ENCODE measurements at regions of chr6 and their contacts with region 1.

Region 1: DNA sequence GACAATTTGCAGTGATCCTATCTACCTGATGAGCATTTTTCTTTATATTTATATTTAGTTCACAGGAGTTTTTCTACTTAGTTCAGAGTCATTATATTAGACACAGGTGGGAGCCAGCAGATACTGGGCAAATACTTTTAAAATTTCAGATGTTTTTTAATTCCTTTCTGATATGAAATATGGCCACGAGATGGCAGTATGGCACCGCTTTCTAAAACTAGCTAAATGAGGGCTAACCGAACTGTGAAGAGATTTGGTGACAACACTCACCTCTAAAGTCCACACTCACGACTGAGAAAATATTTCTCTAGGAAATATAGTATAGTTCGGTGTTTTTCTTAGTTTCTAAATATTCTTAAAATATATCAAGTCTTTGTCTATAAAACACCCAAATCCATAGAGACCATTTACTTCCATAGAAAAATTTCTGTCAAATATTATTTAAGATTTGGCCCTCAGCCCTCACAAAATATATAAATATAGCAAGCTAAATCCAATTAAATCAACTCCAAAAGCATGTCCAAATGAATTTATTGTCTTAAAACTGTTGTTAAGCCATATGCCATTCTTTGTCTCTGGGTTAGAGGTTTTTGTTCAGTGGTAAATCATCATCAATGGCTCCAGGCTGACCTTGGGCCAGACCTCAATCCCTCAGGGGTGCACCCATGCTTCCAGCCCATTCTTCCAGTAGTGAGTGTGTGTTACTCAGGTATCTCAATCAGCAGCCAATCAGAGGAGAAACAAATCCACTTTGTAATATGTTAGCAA is 63.6 kb downstream of the HUS1B start:
- DNase-seq: peak; percentile 52
- H3K4me3 ChIP-seq: no peak overlapping the region
- H3K27ac ChIP-seq: no peak overlapping the region
- H3K4me1 ChIP-seq: no peaks in the 10 kb centered on the region
- H3K27me3 ChIP-seq: no peaks in the 10 kb centered on the region
- CTCF ChIP-seq: peak; percentile 81
- EP300 ChIP-seq: no peak
- RAD21 ChIP-seq: peak; percentile 79

Region 2: DNA sequence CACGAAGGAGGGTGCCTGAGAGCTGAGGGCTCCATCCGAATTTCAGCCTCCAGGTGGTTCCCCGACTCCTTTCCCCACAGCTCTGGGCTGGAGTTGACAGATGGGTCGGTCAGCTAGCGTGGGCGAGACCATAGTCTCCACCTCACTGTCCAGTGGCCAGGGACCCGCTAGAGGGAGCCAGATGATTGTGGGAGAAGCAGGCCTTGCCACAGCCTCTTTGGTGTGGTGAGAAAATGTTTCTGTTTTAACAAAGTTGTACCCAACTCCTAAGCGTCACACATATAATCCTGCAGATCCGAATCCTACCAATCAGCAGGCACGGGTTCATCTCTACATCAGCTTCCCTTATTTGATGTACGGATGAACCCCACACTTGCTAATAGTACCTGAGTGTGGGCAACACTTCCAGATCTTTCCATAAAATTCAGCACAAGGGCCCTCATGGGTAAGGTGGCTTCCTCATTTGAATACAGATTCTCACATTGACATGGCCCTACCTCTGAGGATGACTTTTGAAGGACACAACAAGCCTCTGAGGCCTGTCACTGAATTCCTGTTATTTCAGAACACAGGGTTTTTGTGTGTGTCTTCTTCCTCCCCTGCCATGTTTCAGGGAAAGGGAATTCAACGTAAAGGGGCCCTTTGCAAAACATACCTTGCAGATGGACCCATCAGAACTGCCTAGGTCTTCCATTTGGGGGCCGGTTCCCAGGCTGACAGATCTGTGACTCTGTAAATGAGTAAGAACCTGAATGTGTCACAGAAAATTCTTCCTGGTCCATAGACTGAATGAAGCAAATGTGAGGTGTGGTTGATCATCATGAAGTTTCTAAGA is 404.3 kb before region 1 on chr6:
- CTCF ChIA-PET with region 1: interaction called, 20 read pairs
- POLR2A ChIA-PET with region 1: no interaction called
- DNase-seq: peak; percentile 82
- H3K4me3 ChIP-seq: peak overlapping the region in 1 of 2 experiments; percentile 12; a peak in 1 of 4 replicates
- H3K27ac ChIP-seq: no peak overlapping the region
- H3K4me1 ChIP-seq: no peaks in the 10 kb centered on the region
- H3K27me3 ChIP-seq: peaks cover 44% of the 10 kb centered on the region; the same call in 1 of the 2 replicates
- CTCF ChIP-seq: peak; percentile 93
- EP300 ChIP-seq: no peak
- RAD21 ChIP-seq: peak; percentile 94

Region 3: GRCh38 chr6:446418-447366 is 146.6 kb before region 1 on chr6:
- CTCF ChIA-PET with region 1: no interaction called
- POLR2A ChIA-PET with region 1: no interaction called
- DNase-seq: no peak
- H3K4me3 ChIP-seq: no peak overlapping the region
- H3K27ac ChIP-seq: no peak overlapping the region
- H3K4me1 ChIP-seq: no peaks in the 10 kb centered on the region
- H3K27me3 ChIP-seq: peaks cover 66% of the 10 kb centered on the region; the same call in 1 of the 2 replicates
- CTCF ChIP-seq: no peak
- EP300 ChIP-seq: no peak
- RAD21 ChIP-seq: no peak

Region 4: DNA sequence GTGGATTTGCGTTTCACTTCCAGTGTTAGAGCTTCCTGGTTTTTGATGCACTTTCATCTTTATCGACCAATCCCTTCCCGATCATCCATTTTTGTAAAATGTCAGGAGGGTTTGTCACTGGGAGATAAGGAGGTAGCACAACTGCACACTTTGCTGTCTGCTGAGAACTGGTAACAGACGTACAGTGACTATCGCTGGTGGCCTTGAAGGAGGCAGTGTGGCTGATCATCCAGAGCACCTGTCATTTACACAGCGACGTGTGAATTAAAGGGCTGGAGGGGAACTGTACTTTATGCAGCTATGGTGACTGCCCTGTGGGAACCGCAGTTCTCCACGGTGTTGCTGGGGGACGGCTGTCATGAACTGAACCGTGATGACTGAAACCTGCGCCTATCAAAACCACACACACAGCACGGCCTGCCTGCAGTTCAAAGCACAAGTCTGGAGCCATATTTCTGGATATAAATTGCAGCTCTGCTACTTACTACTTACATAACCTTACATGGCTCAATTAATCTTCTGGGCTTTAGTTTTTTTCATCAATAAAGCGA is 13.6 kb after region 1 on chr6:
- CTCF ChIA-PET with region 1: interaction called, 24 read pairs
- POLR2A ChIA-PET with region 1: no interaction called
- DNase-seq: no peak
- H3K4me3 ChIP-seq: no peak overlapping the region
- H3K27ac ChIP-seq: no peak overlapping the region
- H3K4me1 ChIP-seq: no peaks in the 10 kb centered on the region; a peak in 1 of 4 replicates
- H3K27me3 ChIP-seq: no peaks in the 10 kb centered on the region
- CTCF ChIP-seq: no peak
- EP300 ChIP-seq: no peak
- RAD21 ChIP-seq: no peak

Region 5: GRCh38 chr6:674406-674805 is 81.1 kb after region 1 on chr6:
- CTCF ChIA-PET with region 1: no interaction called
- POLR2A ChIA-PET with region 1: no interaction called
- DNase-seq: no peak
- H3K4me3 ChIP-seq: no peak overlapping the region
- H3K27ac ChIP-seq: no peak overlapping the region
- H3K4me1 ChIP-seq: no peaks in the 10 kb centered on the region
- H3K27me3 ChIP-seq: no peaks in the 10 kb centered on the region
- CTCF ChIP-seq: no peak
- EP300 ChIP-seq: no peak
- RAD21 ChIP-seq: no peak

Region 6: DNA sequence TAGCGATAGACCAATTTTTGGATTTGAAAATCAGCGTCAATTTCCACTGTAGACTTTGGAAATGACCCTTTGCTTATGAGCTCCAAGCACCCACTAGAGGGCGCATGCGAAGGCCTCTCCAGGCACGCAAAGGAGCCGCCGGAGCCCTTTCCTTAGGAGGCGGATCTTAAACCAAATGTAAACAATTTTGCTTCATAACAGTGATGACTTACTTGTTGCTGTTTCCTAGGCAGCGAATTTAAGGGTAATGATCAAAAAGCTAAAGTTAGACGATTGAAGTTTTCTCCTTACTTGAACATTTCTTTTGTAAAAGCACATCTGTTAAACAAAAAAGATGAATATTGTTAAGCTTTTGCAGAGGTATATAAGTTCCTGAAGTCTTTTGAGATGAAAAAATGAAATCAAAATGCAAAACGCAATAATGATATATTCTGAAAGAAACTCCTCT is 128.8 kb after region 1 on chr6:
- CTCF ChIA-PET with region 1: interaction called, 44 read pairs
- POLR2A ChIA-PET with region 1: no interaction called
- DNase-seq: peak; percentile 71
- H3K4me3 ChIP-seq: peak overlapping the region in 1 of 2 experiments; percentile 4; a peak in 1 of 4 replicates
- H3K27ac ChIP-seq: no peak overlapping the region
- H3K4me1 ChIP-seq: no peaks in the 10 kb centered on the region
- H3K27me3 ChIP-seq: peaks cover 15% of the 10 kb centered on the region; the same call in 1 of the 2 replicates
- CTCF ChIP-seq: peak; percentile 97
- EP300 ChIP-seq: no peak
- RAD21 ChIP-seq: peak; percentile 57

Region 7: GRCh38 chr6:1387876-1388629 is 794.7 kb after region 1 on chr6:
- CTCF ChIA-PET with region 1: interaction called, 10 read pairs
- POLR2A ChIA-PET with region 1: no interaction called
- DNase-seq: no peak
- H3K4me3 ChIP-seq: no peak overlapping the region
- H3K27ac ChIP-seq: no peak overlapping the region
- H3K4me1 ChIP-seq: no peaks in the 10 kb centered on the region
- H3K27me3 ChIP-seq: peaks cover 82% of the 10 kb centered on the region
- CTCF ChIP-seq: no peak
- EP300 ChIP-seq: no peak
- RAD21 ChIP-seq: no peak

Region 8: GRCh38 chr6:1436334-1437306 is 843.3 kb after region 1 on chr6:
- CTCF ChIA-PET with region 1: interaction called, 11 read pairs
- POLR2A ChIA-PET with region 1: no interaction called
- DNase-seq: peak; percentile 71
- H3K4me3 ChIP-seq: peak overlapping the region in 1 of 2 experiments; percentile 17; a peak in 1 of 4 replicates
- H3K27ac ChIP-seq: no peak overlapping the region
- H3K4me1 ChIP-seq: no peaks in the 10 kb centered on the region
- H3K27me3 ChIP-seq: peaks cover 40% of the 10 kb centered on the region
- CTCF ChIP-seq: peak; percentile 75
- EP300 ChIP-seq: no peak
- RAD21 ChIP-seq: peak; percentile 81

Measured in SK-N-SH (cell line).